Prostate gland (tissue), 2 donors: ENCODE measurements at regions of chr10 and their contacts with region 1.

Region 1: GRCh38 chr10:80205478-80206276 is at the start of gene ANXA11:
- DNase-seq: peak; percentile 84
- H3K4me3 ChIP-seq: peak within 1 kb of the TSS; percentile 89 to 91
- H3K27ac ChIP-seq: peak within 1 kb of the TSS; percentile 95 to 97
- H3K4me1 ChIP-seq: peaks cover 9% of the 10 kb centered on the region
- H3K27me3 ChIP-seq: no peaks in the 10 kb centered on the region
- CTCF ChIP-seq: peak in 1 of 4 experiments; percentile 7
- POLR2A ChIP-seq: peak; percentile 98
- total RNA-seq, gene ANXA11: 158 to 174 TPM

Region 2: DNA sequence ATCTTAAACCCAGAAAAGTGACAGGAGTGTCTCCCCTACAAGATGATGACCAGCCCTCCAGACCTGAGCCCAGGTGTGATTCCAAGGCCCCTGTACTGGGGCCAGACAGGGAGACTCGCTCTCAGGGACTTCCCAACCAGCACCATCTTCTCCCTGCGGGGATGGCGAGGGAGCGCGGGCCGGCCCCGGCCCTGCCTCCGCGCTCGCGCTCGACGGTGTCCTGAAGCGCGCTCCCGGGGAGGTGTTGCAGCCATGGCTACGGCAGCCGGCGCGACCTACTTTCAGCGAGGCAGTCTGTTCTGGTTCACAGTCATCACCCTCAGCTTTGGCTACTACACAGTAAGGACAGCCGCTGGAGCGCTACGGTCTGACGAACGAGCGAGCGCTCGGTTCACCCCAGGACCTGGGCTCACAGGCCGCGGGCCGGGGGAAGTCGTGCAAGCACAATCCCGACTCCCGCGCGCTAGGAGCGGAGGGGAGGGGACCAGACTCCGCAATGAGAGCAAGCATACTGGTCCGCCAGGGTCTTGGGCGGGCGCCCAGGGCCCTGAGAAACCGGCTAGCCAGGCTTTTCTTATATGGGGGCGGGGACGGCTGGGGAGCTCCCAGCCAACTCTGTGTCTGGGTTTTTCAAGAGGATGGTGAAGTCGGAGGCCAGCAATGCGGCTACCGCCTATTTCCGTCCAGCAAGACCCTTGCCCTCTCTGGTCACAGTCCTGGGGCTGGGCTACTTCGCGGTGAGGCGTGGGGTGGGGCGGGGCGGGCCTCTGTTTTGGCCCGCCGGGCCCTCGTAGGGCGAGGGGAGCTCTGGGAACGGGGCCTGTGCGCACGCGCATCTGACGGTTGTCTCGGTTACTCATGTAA is 127.0 kb before region 1 on chr10 and contains the start of gene TMEM254:
- intact Hi-C with region 1: loop called (anchors 2 kb)
- DNase-seq: peak; percentile 88
- H3K4me3 ChIP-seq: peak within 1 kb of the TSS; percentile 63 to 76
- H3K27ac ChIP-seq: peak within 1 kb of the TSS; percentile 90 to 92
- H3K4me1 ChIP-seq: peaks cover 5% of the 10 kb centered on the region
- H3K27me3 ChIP-seq: no peaks in the 10 kb centered on the region
- CTCF ChIP-seq: no peak
- POLR2A ChIP-seq: no peak
- total RNA-seq, gene TMEM254: 52.7 to 95.9 TPM

Region 3: DNA sequence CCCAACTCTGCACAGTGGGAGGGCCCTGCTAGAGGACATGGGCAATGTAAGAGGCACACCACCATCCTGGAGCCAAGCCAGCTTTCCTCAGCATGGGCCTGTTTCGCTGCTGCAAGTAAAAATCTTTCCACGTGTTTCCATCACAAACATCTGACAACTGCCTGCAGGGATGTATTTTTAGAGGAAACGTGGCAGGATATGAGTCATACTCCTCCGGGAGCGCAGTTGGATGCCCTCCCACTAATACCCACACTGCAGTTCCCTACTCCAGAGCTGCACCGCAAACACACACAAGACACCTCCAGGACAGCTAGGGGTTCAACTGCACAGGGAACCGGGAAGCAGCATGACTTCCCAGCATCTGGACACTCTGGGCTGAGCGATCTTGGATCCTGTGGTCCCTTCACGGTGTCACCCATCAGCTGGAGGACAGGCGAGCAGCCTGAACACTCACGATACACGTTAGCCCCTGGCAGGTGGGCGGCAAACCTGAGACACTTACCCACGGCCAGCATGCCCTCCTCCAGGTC is 47.0 kb before region 1 on chr10:
- intact Hi-C with region 1: loop called (anchors 5 kb)
- DNase-seq: peak; percentile 79
- H3K4me3 ChIP-seq: no peak overlapping the region
- H3K27ac ChIP-seq: peak overlapping the region; percentile 42 to 56
- H3K4me1 ChIP-seq: peaks cover 2% of the 10 kb centered on the region
- H3K27me3 ChIP-seq: no peaks in the 10 kb centered on the region
- CTCF ChIP-seq: no peak
- POLR2A ChIP-seq: no peak